CD4-positive, alpha-beta T cell (primary cell): ENCODE measurements at regions of chr19 and their contacts with region 1.

Region 1: DNA sequence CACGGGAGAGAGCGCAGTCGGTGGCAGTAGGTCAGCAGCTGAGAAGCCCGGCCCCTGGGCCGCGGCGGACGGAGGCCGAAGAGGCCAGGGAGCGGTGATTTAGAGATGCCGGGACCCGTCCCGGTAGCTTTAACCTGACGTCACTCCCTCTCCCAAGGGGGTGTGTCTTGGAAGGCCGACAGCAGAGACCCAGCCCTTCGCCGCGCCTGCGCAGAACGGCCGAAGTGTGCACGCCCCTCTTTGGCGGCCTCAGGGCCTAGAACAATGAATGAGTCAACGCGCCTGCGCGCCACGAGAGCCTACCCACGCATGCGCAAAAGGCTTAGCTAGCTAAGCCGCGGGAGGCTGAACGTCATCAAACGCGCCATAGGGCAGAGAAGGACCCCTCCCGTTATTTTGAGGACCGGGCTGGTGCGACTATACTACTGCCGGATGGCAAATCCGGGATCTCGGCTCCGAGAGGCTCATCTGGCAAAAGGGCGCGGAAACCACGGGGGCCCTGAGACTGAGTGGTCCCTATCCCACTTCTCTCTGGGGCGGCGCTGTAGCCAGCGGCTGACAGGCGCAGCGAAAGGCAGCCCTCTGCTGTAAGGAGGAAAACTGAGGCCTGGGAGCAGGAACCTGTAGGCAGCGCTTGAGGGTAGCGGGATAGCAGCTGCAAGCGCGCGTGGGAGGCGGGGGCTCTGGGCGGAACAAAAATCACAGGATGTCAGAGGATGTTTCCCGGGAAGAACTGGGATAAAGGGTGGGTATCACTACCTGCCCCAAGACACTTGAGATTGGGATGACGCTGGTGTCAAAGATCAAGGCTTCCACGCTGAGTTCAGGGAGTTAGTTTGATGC is at the starts of genes IRGQ and ZNF576:
- DNase-seq: peak; percentile 99 to 100 (median 100)
- ATAC-seq: peak; percentile 73
- H3K4me3 ChIP-seq: peak within 1 kb of the TSS; percentile 73
- H3K4me3 Mint-ChIP-seq: peak within 1 kb of the TSS; percentile 96
- H3K27ac ChIP-seq: peak within 1 kb of the TSS; percentile 97
- H3K27ac Mint-ChIP-seq: peak within 1 kb of the TSS; percentile 100
- H3K4me1 ChIP-seq: peaks cover 44% of the 10 kb centered on the region
- H3K4me1 Mint-ChIP-seq: peaks cover 44% of the 10 kb centered on the region
- H3K27me3 ChIP-seq: no peaks in the 10 kb centered on the region
- H3K27me3 Mint-ChIP-seq: no peaks in the 10 kb centered on the region
- CTCF ChIP-seq: no peak
- total RNA-seq, gene IRGQ: 28.9 to 29.8 TPM
- total RNA-seq, gene ZNF576: 4.1 to 4.8 TPM

Region 2: GRCh38 chr19:43438291-43439096 is 157.7 kb before region 1 on chr19:
- CTCF ChIA-PET with region 1: interaction called, 10 read pairs
- POLR2A ChIA-PET with region 1: interaction called, 25 read pairs
- intact Hi-C with region 1: no loop called
- DNase-seq: peak in 7 of 14 experiments; percentile 10 to 34 (median 26)
- ATAC-seq: peak; percentile 37
- H3K4me3 ChIP-seq: no peak overlapping the region
- H3K4me3 Mint-ChIP-seq: peak overlapping the region; percentile 76
- H3K27ac ChIP-seq: peak overlapping the region; percentile 74 to 90
- H3K27ac Mint-ChIP-seq: peak overlapping the region; percentile 96
- H3K4me1 ChIP-seq: peaks cover 41% of the 10 kb centered on the region
- H3K4me1 Mint-ChIP-seq: peaks cover 64% of the 10 kb centered on the region
- H3K27me3 ChIP-seq: no peaks in the 10 kb centered on the region
- H3K27me3 Mint-ChIP-seq: no peaks in the 10 kb centered on the region
- CTCF ChIP-seq: no peak

Region 3: DNA sequence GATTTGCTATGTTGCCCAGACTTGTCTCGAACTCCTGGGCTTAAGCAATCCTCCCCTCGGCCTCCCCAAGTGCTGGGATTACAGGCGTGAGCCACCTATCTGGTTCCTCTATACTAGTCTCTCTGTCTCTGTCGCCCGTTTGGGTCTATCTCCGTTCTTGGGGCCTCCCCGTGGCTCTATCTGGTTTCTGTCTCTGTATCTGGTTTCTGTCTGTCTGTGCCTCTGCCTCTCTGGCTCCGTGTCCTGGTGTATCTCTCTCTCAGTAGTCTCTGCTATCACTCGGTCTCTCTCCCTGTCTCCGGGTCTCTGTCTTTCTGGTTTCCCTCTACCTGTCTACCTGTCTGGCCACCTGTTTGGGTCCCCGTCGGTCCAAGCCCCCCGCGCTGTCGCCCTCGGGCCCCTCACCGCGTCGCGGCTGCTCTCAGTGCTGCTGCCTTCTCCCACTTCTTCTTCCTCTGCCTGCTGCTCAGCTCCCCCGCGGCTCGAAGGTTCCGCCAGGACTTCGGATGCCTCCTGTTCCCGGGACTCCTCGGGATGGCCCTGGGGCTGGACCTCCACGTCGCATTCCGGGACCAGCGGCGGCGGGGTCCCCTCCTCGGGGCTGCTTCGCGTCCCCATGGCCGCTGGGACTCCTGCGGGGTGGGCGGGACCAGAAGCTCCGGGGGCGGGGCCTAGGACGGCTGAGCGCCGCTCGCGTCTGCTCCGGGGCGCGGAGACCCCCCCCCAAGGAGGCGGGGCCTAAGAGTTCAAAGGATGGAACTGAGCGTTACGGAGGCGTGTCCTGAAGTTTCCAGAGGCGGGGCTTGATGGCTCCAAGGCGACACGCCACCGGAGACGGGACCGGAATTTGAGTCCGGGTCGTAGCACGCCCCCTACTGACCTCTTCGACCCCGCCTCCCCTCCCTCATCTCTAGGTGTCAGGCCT is 92.5 kb before region 1 on chr19:
- CTCF ChIA-PET with region 1: interaction called, 10 read pairs
- POLR2A ChIA-PET with region 1: interaction called, 12 read pairs
- intact Hi-C with region 1: no loop called
- DNase-seq: peak; percentile 98 to 100 (median 99)
- ATAC-seq: peak; percentile 92
- H3K4me3 ChIP-seq: peak overlapping the region; percentile 91
- H3K4me3 Mint-ChIP-seq: peak overlapping the region; percentile 94
- H3K27ac ChIP-seq: peak overlapping the region; percentile 85 to 88
- H3K27ac Mint-ChIP-seq: peak overlapping the region; percentile 96
- H3K4me1 ChIP-seq: peaks cover 35% of the 10 kb centered on the region
- H3K4me1 Mint-ChIP-seq: peaks cover 40% of the 10 kb centered on the region
- H3K27me3 ChIP-seq: no peaks in the 10 kb centered on the region
- H3K27me3 Mint-ChIP-seq: no peaks in the 10 kb centered on the region
- CTCF ChIP-seq: no peak

Region 4: DNA sequence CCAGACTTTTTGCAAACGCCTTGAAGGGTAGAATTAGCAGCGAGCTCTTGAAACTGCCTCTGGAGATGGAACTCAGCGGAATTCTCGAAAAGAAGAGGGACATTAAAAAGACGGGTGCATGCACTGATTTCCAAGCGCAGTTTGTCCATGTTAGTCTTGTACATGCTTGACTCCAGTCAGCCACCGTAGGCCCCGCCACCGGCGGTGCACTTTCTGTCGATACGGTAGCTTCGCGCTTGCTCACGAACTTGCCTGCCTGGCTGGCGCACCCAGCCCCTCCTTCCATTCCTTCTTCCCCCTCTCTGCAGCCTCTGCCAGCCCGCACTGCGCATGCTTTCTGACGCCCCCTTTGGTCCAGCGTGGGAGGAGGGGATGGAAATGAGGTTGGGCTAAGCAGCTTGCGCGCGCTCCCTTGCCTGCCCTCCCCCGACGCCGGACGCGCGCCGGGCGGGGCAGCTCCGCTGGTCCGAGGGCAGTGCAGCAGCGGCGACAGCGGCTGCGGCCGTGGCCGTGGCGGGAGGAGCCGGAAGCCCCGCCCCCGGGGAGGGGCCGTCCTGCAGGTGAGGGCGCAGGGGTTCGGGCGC is 63.2 kb before region 1 on chr19 and contains the start of gene ZNF575:
- CTCF ChIA-PET with region 1: interaction called, 8 read pairs
- POLR2A ChIA-PET with region 1: interaction called, 35 read pairs
- intact Hi-C with region 1: loop called (anchors 1 to 5 kb)
- DNase-seq: peak; percentile 70 to 93 (median 81)
- ATAC-seq: peak; percentile 48
- H3K4me3 ChIP-seq: peak within 1 kb of the TSS; percentile 77
- H3K4me3 Mint-ChIP-seq: peak within 1 kb of the TSS; percentile 96
- H3K27ac ChIP-seq: peak within 1 kb of the TSS; percentile 53 to 61
- H3K27ac Mint-ChIP-seq: peak within 1 kb of the TSS; percentile 92
- H3K4me1 ChIP-seq: peaks cover 21% of the 10 kb centered on the region
- H3K4me1 Mint-ChIP-seq: peaks cover 21% of the 10 kb centered on the region
- H3K27me3 ChIP-seq: no peaks in the 10 kb centered on the region
- H3K27me3 Mint-ChIP-seq: no peaks in the 10 kb centered on the region
- CTCF ChIP-seq: peak; percentile 13
- total RNA-seq, gene ZNF575: 2.6 to 2.7 TPM

Region 5: DNA sequence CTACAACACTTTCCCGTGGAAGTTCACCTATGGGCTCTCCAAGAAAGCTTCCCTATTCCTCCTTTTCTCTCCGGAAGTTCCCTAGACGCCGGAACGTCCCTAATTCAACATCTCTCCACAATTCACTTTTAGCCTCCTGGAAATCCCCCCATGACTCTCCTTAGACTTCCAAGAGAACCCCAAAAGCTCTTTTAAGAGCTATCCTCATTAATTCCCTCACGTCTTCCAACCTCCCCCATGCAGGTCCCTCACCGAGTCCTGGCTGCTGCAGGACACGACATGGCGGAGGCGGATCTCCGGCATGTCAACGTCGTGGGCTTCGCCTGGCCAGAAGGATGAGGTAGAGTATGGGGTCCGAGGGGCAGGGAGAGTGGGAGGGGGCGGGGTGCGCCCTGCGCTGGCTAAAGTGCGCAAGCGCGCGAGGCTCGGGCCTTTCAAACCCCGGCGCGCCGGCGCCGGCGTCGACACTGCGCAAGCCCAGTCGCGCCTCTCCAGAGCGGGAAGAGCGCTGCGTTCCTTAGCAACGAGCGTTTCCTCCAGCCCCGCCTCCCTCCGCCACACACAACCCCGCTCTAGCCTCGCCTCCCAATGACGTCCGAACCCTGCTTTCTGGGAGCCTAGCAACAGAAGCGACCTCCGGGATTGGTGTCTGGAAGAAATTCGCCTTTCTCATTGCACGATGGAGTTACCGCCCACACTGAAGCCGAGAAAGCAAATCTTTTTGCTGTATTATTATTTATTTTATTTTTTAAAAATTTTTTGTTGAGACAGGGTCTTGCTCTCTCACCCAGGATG is 20.9 kb before region 1 on chr19 and contains the starts of genes PINLYP and XRCC1:
- CTCF ChIA-PET with region 1: interaction called, 11 read pairs
- POLR2A ChIA-PET with region 1: interaction called, 27 read pairs
- intact Hi-C with region 1: loop called (anchors 1 kb)
- DNase-seq: peak; percentile 93 to 100 (median 96)
- ATAC-seq: peak; percentile 98
- H3K4me3 ChIP-seq: peak within 1 kb of the TSS; percentile 90
- H3K4me3 Mint-ChIP-seq: peak within 1 kb of the TSS; percentile 98
- H3K27ac ChIP-seq: peak within 1 kb of the TSS; percentile 81 to 94
- H3K27ac Mint-ChIP-seq: peak within 1 kb of the TSS; percentile 96
- H3K4me1 ChIP-seq: peaks cover 33% of the 10 kb centered on the region
- H3K4me1 Mint-ChIP-seq: peaks cover 58% of the 10 kb centered on the region
- H3K27me3 ChIP-seq: no peaks in the 10 kb centered on the region
- H3K27me3 Mint-ChIP-seq: no peaks in the 10 kb centered on the region
- CTCF ChIP-seq: no peak
- total RNA-seq, gene PINLYP: not detected
- total RNA-seq, gene XRCC1: 25.1 to 26.2 TPM

Region 6: GRCh38 chr19:43668406-43669158 is 72.4 kb after region 1 on chr19:
- CTCF ChIA-PET with region 1: interaction called, 3 read pairs
- POLR2A ChIA-PET with region 1: interaction called, 17 read pairs
- intact Hi-C with region 1: loop called in 1 of 2 experiments (anchors 1 kb)
- DNase-seq: peak; percentile 87 to 99 (median 96)
- ATAC-seq: peak; percentile 80
- H3K4me3 ChIP-seq: peak overlapping the region; percentile 68
- H3K4me3 Mint-ChIP-seq: peak overlapping the region; percentile 87
- H3K27ac ChIP-seq: peak overlapping the region in 1 of 2 donors; percentile 37
- H3K27ac Mint-ChIP-seq: peak overlapping the region; percentile 61
- H3K4me1 ChIP-seq: peaks cover 54% of the 10 kb centered on the region
- H3K4me1 Mint-ChIP-seq: peaks cover 52% of the 10 kb centered on the region
- H3K27me3 ChIP-seq: no peaks in the 10 kb centered on the region
- H3K27me3 Mint-ChIP-seq: no peaks in the 10 kb centered on the region
- CTCF ChIP-seq: no peak